Mammary epithelial cell (primary cell): ENCODE measurements at regions of chr7 and their contacts with region 1.

Region 1: DNA sequence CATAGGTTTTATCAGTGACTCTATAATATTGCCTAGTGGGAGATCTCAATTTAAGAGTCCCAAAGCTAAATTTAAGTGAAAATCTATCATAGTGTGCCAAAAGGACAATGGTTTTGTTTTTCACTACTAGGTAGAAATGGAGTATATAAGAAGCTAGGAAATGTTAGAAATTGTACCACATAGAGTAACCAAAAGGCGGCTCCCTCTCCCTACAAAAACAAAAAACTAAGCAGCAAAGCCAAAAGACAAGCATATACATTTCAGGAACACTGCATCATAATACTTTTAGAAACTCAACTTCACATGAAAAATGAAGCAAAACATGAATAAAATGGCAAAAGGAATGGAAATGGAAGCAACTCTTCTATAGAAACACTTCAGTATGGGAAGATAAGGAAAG is 271.6 kb downstream of the CACNA2D1 start:
- DNase-seq: no peak
- H3K4me3 ChIP-seq: no peak overlapping the region
- H3K27ac ChIP-seq: no peak overlapping the region
- H3K4me1 ChIP-seq: no peaks in the 10 kb centered on the region
- H3K27me3 ChIP-seq: peaks cover 1% of the 10 kb centered on the region
- CTCF ChIP-seq: peak in 1 of 2 donors; percentile 36

Region 2: GRCh38 chr7:82224529-82224928 is 52.5 kb after region 1 on chr7:
- CTCF ChIA-PET with region 1: interaction called, 12 read pairs
- dilution Hi-C with region 1: no loop called
- in situ Hi-C with region 1: no loop called
- intact Hi-C with region 1: no loop called
- DNase-seq: no peak
- H3K4me3 ChIP-seq: no peak overlapping the region
- H3K27ac ChIP-seq: no peak overlapping the region
- H3K4me1 ChIP-seq: no peaks in the 10 kb centered on the region
- H3K27me3 ChIP-seq: no peaks in the 10 kb centered on the region
- CTCF ChIP-seq: no peak

Region 3: DNA sequence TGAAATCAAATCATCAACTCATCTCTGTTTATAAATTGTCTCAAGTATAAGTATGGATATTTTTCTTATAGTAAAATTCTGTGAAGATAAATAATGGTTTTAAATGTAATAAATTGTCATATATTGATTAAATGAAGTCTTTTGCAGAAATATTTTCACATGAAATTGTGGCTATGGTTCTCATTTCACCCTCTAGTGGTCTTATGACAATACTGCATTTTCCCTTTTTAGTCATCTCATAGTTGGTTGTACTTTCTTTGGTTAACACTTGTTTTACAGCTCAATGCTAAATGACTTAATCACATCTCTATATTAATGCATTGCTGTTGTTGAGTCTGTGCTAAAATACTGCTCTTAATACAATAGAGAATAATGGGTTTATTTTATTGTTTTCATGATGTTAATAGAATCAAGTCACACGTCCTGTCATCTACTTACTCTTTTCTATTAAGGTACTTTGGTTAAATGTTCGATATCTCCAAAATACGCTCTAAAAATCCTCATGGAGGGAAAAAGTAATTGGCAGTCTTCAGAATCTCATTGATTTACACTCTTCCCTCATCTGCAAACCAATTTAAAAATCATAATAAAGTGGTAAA is 309.6 kb after region 1 on chr7:
- CTCF ChIA-PET with region 1: no interaction called
- dilution Hi-C with region 1: no loop called
- in situ Hi-C with region 1: no loop called
- intact Hi-C with region 1: loop called (anchors 10 kb)
- DNase-seq: peak; percentile 9
- H3K4me3 ChIP-seq: no peak overlapping the region
- H3K27ac ChIP-seq: no peak overlapping the region
- H3K4me1 ChIP-seq: no peaks in the 10 kb centered on the region
- H3K27me3 ChIP-seq: no peaks in the 10 kb centered on the region
- CTCF ChIP-seq: peak; percentile 71 to 72